Activated CD4-positive, alpha-beta memory T cell treated with anti-CD3 and anti-CD28 coated beads, Interleukin-2, amount 10 ng/mL, durations not matched to agents 7 days and 5 days (primary cell): ENCODE measurements at regions of chr18 and their contacts with region 1.

Region 1: DNA sequence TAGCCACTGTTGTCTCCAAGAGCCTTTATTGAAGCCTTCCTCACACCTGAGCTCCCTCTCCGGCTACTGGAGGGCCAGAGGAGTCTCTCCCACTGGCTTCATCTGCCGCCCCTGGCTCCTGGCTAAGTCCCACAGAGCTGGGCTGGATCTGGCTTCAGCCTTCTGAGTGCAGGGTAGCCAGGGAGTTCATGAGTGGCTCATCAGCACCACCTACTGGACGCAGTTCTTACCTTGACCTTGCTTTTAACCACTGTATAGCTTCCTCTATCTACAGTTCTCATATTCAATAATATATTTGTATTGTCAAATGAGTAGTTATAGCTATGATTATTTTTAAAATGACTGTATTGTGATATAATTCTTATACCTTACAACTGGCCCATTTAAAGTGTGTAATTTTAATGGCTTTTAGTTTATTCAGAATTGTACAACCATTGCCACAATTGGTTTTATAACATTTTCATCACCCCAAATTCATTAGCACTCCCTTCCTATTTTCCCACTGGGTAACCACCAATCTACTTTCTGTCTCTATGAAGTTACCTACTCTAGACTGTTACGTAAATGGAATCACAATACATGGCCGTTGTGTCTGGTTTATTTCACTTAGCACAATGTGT is 17.7 kb downstream of the CNDP1 start:
- DNase-seq: peak; percentile 81
- H3K4me3 Mint-ChIP-seq: no peak overlapping the region
- H3K27ac Mint-ChIP-seq: no peak overlapping the region
- H3K4me1 Mint-ChIP-seq: no peaks in the 10 kb centered on the region
- H3K27me3 Mint-ChIP-seq: peaks cover 16% of the 10 kb centered on the region

Region 2: DNA sequence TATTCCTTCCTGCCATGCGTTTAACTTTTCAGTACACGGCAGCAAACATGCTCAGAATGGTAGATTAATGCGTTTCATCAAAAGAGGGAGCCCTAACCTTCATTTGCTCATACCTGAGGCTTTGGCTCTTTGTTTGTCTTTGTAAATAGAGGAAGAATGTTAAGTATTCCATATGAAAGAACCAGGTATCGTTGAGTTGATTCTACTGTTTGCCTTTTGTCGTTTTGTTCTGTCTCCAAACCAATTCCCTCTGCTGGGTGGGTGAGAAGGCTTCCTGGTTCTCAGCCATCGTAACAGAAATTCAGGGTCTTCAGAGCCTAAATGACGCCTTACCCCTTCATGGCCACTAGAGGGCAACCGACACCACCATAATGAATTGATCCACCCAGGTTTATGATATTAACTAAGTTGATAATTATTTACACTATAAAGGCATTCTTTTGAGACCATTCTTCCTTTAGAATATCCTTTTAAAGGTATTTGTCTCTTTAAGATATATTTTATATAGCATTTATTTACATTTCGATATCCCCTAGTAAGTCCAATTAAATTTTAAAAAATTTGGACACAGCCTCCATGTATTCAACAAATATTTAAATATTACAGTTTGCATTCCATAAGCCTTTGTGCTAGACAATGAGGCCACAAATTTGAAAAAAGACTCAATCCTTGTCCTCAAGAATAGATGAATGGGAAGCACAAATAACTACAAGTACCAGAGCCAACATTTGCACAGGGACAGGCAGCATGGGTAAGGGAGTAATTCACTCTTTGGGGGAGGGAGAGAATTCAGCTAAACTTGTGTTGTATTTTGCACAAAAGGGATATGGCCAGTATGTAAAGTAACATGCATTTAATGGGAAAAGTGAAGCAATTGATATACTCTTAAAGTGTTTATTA is 355.6 kb before region 1 on chr18:
- CTCF ChIA-PET with region 1: interaction called, 30 read pairs
- POLR2A ChIA-PET with region 1: no interaction called
- DNase-seq: peak; percentile 52
- H3K4me3 Mint-ChIP-seq: peak overlapping the region; percentile 31
- H3K27ac Mint-ChIP-seq: no peak overlapping the region
- H3K4me1 Mint-ChIP-seq: peaks cover 2% of the 10 kb centered on the region
- H3K27me3 Mint-ChIP-seq: peaks cover 7% of the 10 kb centered on the region

Region 3: GRCh38 chr18:74353169-74353775 is 198.8 kb before region 1 on chr18:
- CTCF ChIA-PET with region 1: interaction called, 46 read pairs
- POLR2A ChIA-PET with region 1: interaction called, 4 read pairs
- DNase-seq: peak; percentile 55
- H3K4me3 Mint-ChIP-seq: no peak overlapping the region
- H3K27ac Mint-ChIP-seq: no peak overlapping the region
- H3K4me1 Mint-ChIP-seq: peaks cover 19% of the 10 kb centered on the region
- H3K27me3 Mint-ChIP-seq: peaks cover 11% of the 10 kb centered on the region

Region 4: DNA sequence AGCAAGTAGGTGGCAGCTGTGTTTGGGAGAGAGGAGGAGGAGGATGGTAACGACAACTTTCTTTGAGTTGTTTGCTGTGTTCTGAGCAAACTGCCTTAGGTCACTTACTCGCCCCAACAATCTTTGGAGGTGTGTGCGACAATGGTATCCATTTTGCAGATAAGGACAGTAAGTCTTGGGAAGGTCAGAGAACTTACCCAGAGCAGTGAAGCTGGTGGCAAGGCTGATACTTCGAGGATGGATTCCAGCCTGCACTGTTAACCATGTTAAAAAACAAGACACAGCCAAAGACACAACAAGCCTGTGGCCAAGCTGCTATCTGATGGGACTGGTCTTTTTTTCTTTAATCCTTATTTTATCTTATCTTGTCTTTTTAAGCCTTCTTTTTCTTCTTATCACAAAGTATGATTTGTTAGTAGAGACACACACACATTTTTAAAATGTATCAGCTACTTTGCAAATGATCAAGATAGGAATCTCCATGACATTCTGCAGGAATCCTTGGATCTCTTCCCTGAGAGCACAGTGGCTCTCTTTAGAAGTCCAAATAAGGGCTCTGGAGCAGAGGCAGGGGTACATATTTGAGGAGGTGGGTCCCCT is 10.2 kb after region 1 on chr18:
- CTCF ChIA-PET with region 1: interaction called, 11 read pairs
- POLR2A ChIA-PET with region 1: no interaction called
- DNase-seq: no peak
- H3K4me3 Mint-ChIP-seq: no peak overlapping the region
- H3K27ac Mint-ChIP-seq: no peak overlapping the region
- H3K4me1 Mint-ChIP-seq: no peaks in the 10 kb centered on the region
- H3K27me3 Mint-ChIP-seq: peaks cover 2% of the 10 kb centered on the region